Activated naive CD4-positive, alpha-beta T cell treated with anti-CD3 and anti-CD28 coated beads for 36 hours (primary cell): ENCODE measurements at regions of chr6 and their contacts with region 1.

Region 1: GRCh38 chr6:6918216-6918983 is 189.4 kb upstream of the RREB1 start:
- DNase-seq: peak; percentile 91
- H3K4me3 Mint-ChIP-seq: no peak overlapping the region
- H3K27ac Mint-ChIP-seq: no peak overlapping the region
- H3K4me1 Mint-ChIP-seq: peaks cover 30% of the 10 kb centered on the region
- H3K27me3 Mint-ChIP-seq: peaks cover 20% of the 10 kb centered on the region

Region 2: GRCh38 chr6:6676910-6677441 is 241.4 kb before region 1 on chr6:
- CTCF ChIA-PET with region 1: no interaction called
- intact Hi-C with region 1: loop called (anchors 5 kb)
- DNase-seq: peak; percentile 92
- H3K4me3 Mint-ChIP-seq: no peak overlapping the region
- H3K27ac Mint-ChIP-seq: no peak overlapping the region
- H3K4me1 Mint-ChIP-seq: peaks cover 6% of the 10 kb centered on the region
- H3K27me3 Mint-ChIP-seq: no peaks in the 10 kb centered on the region

Region 3: DNA sequence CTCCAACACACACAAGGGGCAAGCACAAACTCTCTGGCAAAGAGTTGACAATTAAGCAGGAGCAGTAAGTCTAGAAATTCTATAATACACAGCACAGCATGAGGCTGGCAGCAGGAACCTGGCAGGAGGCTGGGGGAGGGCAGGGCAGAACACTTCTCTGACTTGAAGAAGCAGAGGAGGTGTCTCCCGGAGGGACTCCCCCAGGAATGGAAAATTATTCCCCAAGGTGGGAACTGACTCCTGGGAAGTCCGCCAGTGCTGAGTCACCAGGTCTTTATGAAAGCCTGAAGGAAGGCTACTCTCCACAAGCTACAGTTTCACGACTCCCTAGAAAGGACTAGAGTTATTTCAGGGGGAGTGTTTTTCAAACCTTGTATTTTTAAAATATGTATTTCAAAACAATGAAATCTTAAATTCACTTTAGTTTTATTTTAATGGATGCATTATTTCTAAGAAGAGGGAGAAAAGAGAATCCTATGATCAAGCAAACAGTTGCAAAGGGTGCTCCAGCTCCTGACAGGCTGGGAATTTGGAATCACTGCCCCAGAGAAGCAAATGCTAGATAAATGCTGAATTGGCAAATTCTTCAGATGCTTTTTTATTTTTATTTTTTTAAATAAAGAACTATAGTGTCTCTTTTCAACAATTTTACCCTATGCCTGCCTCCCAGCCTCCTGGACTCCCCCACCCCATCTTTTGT is 137.1 kb before region 1 on chr6:
- CTCF ChIA-PET with region 1: no interaction called
- intact Hi-C with region 1: no loop called
- DNase-seq: no peak
- H3K4me3 Mint-ChIP-seq: no peak overlapping the region
- H3K27ac Mint-ChIP-seq: no peak overlapping the region
- H3K4me1 Mint-ChIP-seq: no peaks in the 10 kb centered on the region
- H3K27me3 Mint-ChIP-seq: peaks cover 6% of the 10 kb centered on the region

Region 4: GRCh38 chr6:6811151-6812002 is 107.0 kb before region 1 on chr6:
- CTCF ChIA-PET with region 1: no interaction called
- intact Hi-C with region 1: loop called (anchors 1 kb)
- DNase-seq: peak; percentile 79
- H3K4me3 Mint-ChIP-seq: peak overlapping the region; percentile 66
- H3K27ac Mint-ChIP-seq: peak overlapping the region; percentile 72
- H3K4me1 Mint-ChIP-seq: peaks cover 20% of the 10 kb centered on the region
- H3K27me3 Mint-ChIP-seq: no peaks in the 10 kb centered on the region

Region 5: DNA sequence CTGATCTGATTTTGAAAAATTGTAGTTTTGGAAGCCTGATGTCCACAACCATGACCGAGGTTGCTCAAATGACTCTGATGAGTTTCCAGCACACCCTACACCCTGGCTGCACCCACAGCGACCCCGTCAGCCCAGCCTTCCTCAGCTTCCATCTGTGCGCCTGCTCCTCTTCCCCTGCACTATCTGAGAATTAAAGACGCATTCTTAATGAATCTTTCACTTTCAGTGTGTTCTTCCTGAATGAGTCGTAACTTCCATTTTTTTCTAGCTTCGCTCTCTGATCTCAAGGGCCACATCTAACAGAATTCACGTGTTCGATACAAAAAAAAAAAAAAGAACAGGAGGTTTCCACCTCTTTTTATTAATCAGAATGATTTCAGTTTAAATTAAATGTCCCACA is 168.1 kb after region 1 on chr6:
- CTCF ChIA-PET with region 1: no interaction called
- intact Hi-C with region 1: loop called (anchors 1 kb)
- DNase-seq: peak; percentile 65
- H3K4me3 Mint-ChIP-seq: peak overlapping the region; percentile 17
- H3K27ac Mint-ChIP-seq: no peak overlapping the region
- H3K4me1 Mint-ChIP-seq: peaks cover 29% of the 10 kb centered on the region
- H3K27me3 Mint-ChIP-seq: no peaks in the 10 kb centered on the region

Region 6: DNA sequence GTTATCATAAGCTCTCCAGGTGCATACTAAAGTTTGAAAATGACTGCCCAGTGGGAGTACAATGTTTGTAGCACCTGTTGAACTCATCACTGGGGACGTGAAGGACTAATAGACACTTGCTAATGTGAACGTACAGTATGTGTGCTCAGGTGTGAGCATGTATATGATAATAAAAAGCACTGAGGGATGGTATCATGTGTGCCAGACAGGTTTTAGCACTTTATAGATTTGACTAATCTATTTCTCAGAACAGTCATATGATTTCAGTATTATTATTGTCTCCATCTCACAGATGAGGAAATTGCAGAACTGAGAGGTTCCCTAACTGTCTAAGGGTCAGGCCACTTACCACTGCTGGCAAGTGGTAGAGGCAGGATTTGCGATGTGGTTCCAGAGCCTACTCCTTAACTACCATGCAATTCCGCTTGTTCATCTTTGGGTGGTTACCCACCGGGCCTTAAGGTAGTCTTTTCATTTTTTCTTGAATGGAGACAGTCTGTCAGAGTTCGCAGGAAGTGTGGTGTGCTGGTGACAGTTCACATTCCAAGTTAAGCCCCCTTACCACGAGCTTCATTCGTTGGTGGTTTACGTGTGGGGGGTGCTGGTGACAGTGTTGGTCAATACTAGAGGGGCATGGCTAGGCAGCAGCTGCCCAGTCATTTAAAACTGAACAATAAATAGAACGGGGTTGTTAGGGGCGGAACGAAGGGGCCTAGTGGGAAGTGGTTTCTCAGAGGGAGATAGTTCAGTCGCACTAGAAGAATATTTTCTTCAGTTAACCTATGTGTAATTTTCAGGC is 236.1 kb after region 1 on chr6:
- CTCF ChIA-PET with region 1: no interaction called
- intact Hi-C with region 1: loop called (anchors 1 kb)
- DNase-seq: peak; percentile 36
- H3K4me3 Mint-ChIP-seq: peak overlapping the region; percentile 19
- H3K27ac Mint-ChIP-seq: peak overlapping the region; percentile 65
- H3K4me1 Mint-ChIP-seq: peaks cover 85% of the 10 kb centered on the region
- H3K27me3 Mint-ChIP-seq: no peaks in the 10 kb centered on the region

Region 7: DNA sequence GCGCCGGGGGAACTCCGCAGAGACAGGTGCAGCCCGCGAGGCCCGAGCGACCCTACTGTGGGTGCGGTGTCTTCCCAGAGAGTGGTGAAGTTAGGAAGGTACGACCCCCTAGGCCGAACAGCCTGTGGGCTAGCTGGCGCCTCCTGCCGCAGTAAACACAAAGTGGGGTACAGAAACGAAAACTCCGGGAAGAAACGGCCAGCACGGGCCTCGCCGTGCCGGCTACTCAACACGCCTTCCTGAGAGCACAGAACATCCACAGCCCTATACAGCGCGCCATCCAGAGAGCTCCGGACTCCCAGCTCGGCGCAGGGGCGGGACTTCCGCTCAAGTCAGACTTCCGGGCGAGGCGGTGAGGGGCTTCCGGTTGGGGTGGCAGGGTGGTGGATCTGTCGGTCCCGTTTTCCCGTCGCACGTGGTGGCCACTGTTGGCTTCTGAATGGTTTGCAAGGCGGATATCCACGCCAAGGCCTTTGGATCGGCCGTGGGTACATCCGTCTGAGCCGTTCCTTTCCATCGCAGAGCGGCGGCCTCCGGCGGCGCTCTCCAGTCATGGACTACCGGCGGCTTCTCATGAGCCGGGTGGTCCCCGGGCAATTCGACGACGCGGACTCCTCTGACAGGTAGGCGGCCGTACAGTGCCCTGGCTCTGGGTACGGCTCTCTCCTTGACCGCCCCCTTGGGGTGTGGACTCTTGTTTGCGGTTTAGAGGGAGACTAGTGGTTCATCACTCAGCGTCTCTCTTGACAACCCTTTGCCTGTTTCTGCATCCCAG is 471.2 kb after region 1 on chr6 and contains the starts of genes CAGE1 and RIOK1:
- CTCF ChIA-PET with region 1: no interaction called
- intact Hi-C with region 1: loop called (anchors 1 kb)
- DNase-seq: peak; percentile 97
- H3K4me3 Mint-ChIP-seq: peak within 1 kb of the TSS; percentile 94
- H3K27ac Mint-ChIP-seq: peak within 1 kb of the TSS; percentile 97
- H3K4me1 Mint-ChIP-seq: peaks cover 40% of the 10 kb centered on the region
- H3K27me3 Mint-ChIP-seq: no peaks in the 10 kb centered on the region
- total RNA-seq, gene CAGE1: 0.25 to 0.26 TPM
- total RNA-seq, gene RIOK1: 33.8 to 38.5 TPM